ENCODE measurements at regions of chr9 and their contacts with region 1.

Region 1: GRCh38 chr9:33466565-33467495 is 6.9 kb downstream of the NOL6 start:
- DNase-seq: peak; percentile 54
- H3K4me3 Mint-ChIP-seq: no peak overlapping the region
- H3K27ac Mint-ChIP-seq: no peak overlapping the region
- H3K4me1 Mint-ChIP-seq: peaks cover 6% of the 10 kb centered on the region
- H3K27me3 Mint-ChIP-seq: no peaks in the 10 kb centered on the region
- CTCF ChIP-seq: peak; percentile 97

Region 2: GRCh38 chr9:33225319-33226149 is 241.3 kb before region 1 on chr9:
- CTCF ChIA-PET with region 1: interaction called, 6 read pairs
- POLR2A ChIA-PET with region 1: no interaction called
- intact Hi-C with region 1: loop called (anchors 5 kb)
- DNase-seq: peak; percentile 83
- H3K4me3 Mint-ChIP-seq: no peak overlapping the region
- H3K27ac Mint-ChIP-seq: no peak overlapping the region
- H3K4me1 Mint-ChIP-seq: peaks cover 33% of the 10 kb centered on the region
- H3K27me3 Mint-ChIP-seq: no peaks in the 10 kb centered on the region
- CTCF ChIP-seq: peak; percentile 52

Region 3: GRCh38 chr9:33297432-33297831 is 169.4 kb before region 1 on chr9:
- CTCF ChIA-PET with region 1: no interaction called
- POLR2A ChIA-PET with region 1: no interaction called
- intact Hi-C with region 1: no loop called
- DNase-seq: peak; percentile 5
- H3K4me3 Mint-ChIP-seq: peak overlapping the region; percentile 19
- H3K27ac Mint-ChIP-seq: peak overlapping the region; percentile 59
- H3K4me1 Mint-ChIP-seq: peaks cover 49% of the 10 kb centered on the region
- H3K27me3 Mint-ChIP-seq: no peaks in the 10 kb centered on the region
- CTCF ChIP-seq: no peak

Region 4: GRCh38 chr9:33393581-33393980 is 73.2 kb before region 1 on chr9:
- CTCF ChIA-PET with region 1: interaction called, 10 read pairs
- POLR2A ChIA-PET with region 1: no interaction called
- intact Hi-C with region 1: no loop called
- DNase-seq: no peak
- H3K4me3 Mint-ChIP-seq: no peak overlapping the region
- H3K27ac Mint-ChIP-seq: peak overlapping the region; percentile 6
- H3K4me1 Mint-ChIP-seq: peaks cover 27% of the 10 kb centered on the region
- H3K27me3 Mint-ChIP-seq: peaks cover 19% of the 10 kb centered on the region
- CTCF ChIP-seq: no peak

Region 5: GRCh38 chr9:33415501-33416038 is 51.3 kb before region 1 on chr9:
- CTCF ChIA-PET with region 1: interaction called, 50 read pairs
- POLR2A ChIA-PET with region 1: interaction called, 3 read pairs
- intact Hi-C with region 1: no loop called
- DNase-seq: peak; percentile 82
- H3K4me3 Mint-ChIP-seq: no peak overlapping the region
- H3K27ac Mint-ChIP-seq: peak overlapping the region; percentile 36
- H3K4me1 Mint-ChIP-seq: peaks cover 34% of the 10 kb centered on the region
- H3K27me3 Mint-ChIP-seq: no peaks in the 10 kb centered on the region
- CTCF ChIP-seq: peak; percentile 57

Region 6: GRCh38 chr9:33446946-33447798 is 19.7 kb before region 1 on chr9 and contains the start of gene AQP3:
- CTCF ChIA-PET with region 1: interaction called, 91 read pairs
- POLR2A ChIA-PET with region 1: interaction called, 3 read pairs
- intact Hi-C with region 1: no loop called
- DNase-seq: peak; percentile 64
- H3K4me3 Mint-ChIP-seq: peak within 1 kb of the TSS; percentile 67
- H3K27ac Mint-ChIP-seq: peak within 1 kb of the TSS; percentile 47
- H3K4me1 Mint-ChIP-seq: peaks cover 42% of the 10 kb centered on the region
- H3K27me3 Mint-ChIP-seq: no peaks in the 10 kb centered on the region
- CTCF ChIP-seq: no peak
- total RNA-seq, gene AQP3: 0.83 and 0.89 TPM in 2 replicates

Region 7: DNA sequence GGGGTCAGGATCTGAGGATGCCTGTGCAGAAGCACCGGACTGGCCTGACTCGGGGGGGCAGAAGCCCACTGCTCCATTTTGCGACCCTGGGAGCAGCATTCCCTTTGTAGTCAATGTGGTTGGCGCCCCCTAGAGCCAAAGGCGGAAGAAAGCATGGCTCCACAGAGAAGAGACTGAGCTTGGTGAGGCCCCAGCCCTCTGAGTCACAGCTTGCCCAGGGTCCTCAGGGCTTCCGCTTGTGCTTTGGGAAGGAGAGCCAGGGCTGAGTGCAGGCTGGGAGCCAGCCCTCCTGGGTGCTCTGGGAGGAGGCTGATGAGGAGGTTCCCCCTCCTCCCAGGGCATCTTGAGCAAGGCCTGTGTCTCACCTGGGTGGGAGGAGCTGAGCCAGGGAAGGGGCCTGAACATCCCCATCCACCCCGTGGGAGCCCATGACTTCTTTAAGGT is 14.0 kb before region 1 on chr9:
- CTCF ChIA-PET with region 1: interaction called, 91 read pairs
- POLR2A ChIA-PET with region 1: interaction called, 3 read pairs
- intact Hi-C with region 1: no loop called
- DNase-seq: peak; percentile 96
- H3K4me3 Mint-ChIP-seq: no peak overlapping the region
- H3K27ac Mint-ChIP-seq: no peak overlapping the region
- H3K4me1 Mint-ChIP-seq: peaks cover 13% of the 10 kb centered on the region
- H3K27me3 Mint-ChIP-seq: no peaks in the 10 kb centered on the region
- CTCF ChIP-seq: peak; percentile 66

Region 8: DNA sequence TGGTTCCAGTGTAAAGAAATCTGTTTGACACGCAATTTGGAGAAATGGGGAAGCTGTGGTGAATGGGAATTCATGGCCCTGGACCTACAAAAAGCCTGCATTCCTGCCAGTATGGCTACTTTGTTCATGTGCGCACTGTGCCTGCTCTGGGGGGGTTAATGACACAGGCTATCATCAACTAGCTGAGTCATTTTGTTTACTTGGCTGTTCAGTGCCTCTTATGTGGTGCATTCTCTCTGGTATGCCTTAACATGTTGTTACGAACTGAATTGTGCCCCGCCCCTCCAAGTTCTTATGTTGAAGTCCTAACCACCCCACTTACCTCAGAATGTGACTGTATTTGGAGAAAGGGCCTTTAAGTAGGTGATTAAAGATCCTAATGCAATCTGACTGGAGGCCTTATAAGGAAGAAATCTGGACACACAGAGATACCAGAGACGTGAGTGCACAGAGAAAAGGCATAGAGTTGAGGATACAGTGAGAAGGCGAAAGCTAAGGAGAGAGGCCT is 691.6 kb after region 1 on chr9:
- CTCF ChIA-PET with region 1: no interaction called
- POLR2A ChIA-PET with region 1: no interaction called
- intact Hi-C with region 1: no loop called
- DNase-seq: peak; percentile 84
- H3K4me3 Mint-ChIP-seq: no peak overlapping the region
- H3K27ac Mint-ChIP-seq: peak overlapping the region; percentile 57
- H3K4me1 Mint-ChIP-seq: peaks cover 20% of the 10 kb centered on the region
- H3K27me3 Mint-ChIP-seq: no peaks in the 10 kb centered on the region
- CTCF ChIP-seq: no peak

Region 9: GRCh38 chr9:34741628-34742027 is 1274.8 kb after region 1 on chr9:
- CTCF ChIA-PET with region 1: no interaction called
- POLR2A ChIA-PET with region 1: no interaction called
- intact Hi-C with region 1: no loop called
- DNase-seq: no peak
- H3K4me3 Mint-ChIP-seq: no peak overlapping the region
- H3K27ac Mint-ChIP-seq: no peak overlapping the region
- H3K4me1 Mint-ChIP-seq: peaks cover 23% of the 10 kb centered on the region
- H3K27me3 Mint-ChIP-seq: no peaks in the 10 kb centered on the region
- CTCF ChIP-seq: no peak